Psoas muscle (tissue), 8 donors: ENCODE measurements at regions of chr1 and their contacts with region 1.

Region 1: GRCh38 chr1:186482661-186483255 is 21.8 kb upstream of the PDC start:
- DNase-seq: peak; percentile 30 to 43
- ATAC-seq: peak in 2 of 4 donors; percentile 55 to 65
- H3K4me3 ChIP-seq: no peak overlapping the region
- H3K27ac ChIP-seq: no peak overlapping the region
- H3K4me1 ChIP-seq: no peaks in the 10 kb centered on the region
- H3K27me3 ChIP-seq: no peaks in the 10 kb centered on the region
- CTCF ChIP-seq: peak; percentile 76

Region 2: GRCh38 chr1:186626356-186626932 is 143.7 kb after region 1 on chr1:
- intact Hi-C with region 1: no loop called
- DNase-seq: no peak
- ATAC-seq: no peak
- H3K4me3 ChIP-seq: no peak overlapping the region
- H3K27ac ChIP-seq: no peak overlapping the region
- H3K4me1 ChIP-seq: no peaks in the 10 kb centered on the region
- H3K27me3 ChIP-seq: no peaks in the 10 kb centered on the region
- CTCF ChIP-seq: no peak

Region 3: DNA sequence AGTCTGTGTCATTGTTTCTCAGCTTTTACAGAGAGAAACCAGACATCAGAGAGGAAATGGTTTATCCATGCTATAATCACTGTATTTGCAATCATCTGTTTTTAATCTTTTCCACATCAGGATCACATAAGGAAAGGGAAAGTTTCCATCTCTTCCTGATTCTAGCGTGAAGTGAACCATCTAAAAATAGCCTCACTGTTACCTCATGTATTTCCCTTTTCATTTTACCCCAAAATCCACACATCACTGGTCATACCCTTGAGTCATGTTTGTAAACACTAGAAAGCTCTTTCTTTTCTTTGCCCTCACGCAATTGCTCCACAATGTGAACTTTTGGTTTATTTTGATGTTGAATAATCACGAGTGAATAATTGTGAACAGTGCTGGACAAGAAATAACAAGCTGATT is 492.0 kb after region 1 on chr1:
- intact Hi-C with region 1: loop called in 1 of 2 experiments (anchors 5 kb)
- DNase-seq: no peak
- ATAC-seq: no peak
- H3K4me3 ChIP-seq: no peak overlapping the region
- H3K27ac ChIP-seq: no peak overlapping the region
- H3K4me1 ChIP-seq: no peaks in the 10 kb centered on the region
- H3K27me3 ChIP-seq: no peaks in the 10 kb centered on the region
- CTCF ChIP-seq: no peak

Region 4: DNA sequence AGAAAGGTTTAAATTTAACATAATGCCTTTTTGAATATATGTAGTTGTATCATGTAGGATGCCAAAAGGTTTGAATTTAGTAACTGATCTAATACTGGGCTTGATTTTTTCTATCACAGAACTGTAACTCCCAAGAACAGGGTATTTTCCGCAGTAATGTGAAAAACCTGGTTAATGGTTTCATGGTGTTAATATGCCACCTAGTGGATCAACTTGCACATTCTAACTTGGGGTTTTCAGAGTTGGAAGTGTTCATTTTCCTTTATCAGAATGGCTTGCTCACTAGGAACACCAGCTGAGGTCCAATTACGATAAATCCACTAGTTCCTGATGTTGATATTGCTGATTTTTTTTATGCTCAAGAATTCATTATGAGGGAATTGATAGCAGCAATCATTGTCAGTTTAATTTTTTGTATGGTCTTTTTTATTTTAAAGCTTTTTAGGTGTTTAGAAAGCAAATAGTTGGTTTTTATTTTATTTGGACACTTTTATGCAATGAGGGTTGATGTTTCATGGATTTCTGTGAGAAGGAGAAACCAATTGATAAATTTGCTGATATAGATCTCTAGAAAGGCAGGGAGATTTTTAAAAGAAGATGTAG is 503.2 kb after region 1 on chr1:
- intact Hi-C with region 1: loop called (anchors 2 to 5 kb)
- DNase-seq: no peak
- ATAC-seq: peak in 2 of 4 donors; percentile 56 to 72
- H3K4me3 ChIP-seq: no peak overlapping the region
- H3K27ac ChIP-seq: no peak overlapping the region
- H3K4me1 ChIP-seq: no peaks in the 10 kb centered on the region
- H3K27me3 ChIP-seq: no peaks in the 10 kb centered on the region
- CTCF ChIP-seq: peak; percentile 60